Breast epithelium (tissue), 4 donors: ENCODE measurements at regions of chr5 and their contacts with region 1.

Region 1: GRCh38 chr5:55172051-55172899 is 702 bp downstream of the CDC20B start:
- DNase-seq: peak in 1 of 2 donors; percentile 42
- H3K4me3 ChIP-seq: peak overlapping the region; percentile 35 to 67 (median 53)
- H3K27ac ChIP-seq: no peak overlapping the region
- H3K4me1 ChIP-seq: peaks cover 0 to 5% of the 10 kb centered on the region in 2 donors
- H3K27me3 ChIP-seq: peaks cover 0 to 36% of the 10 kb centered on the region in 2 donors
- CTCF ChIP-seq: peak; percentile 66 to 82 (median 79)
- POLR2A ChIP-seq: no peak

Region 2: DNA sequence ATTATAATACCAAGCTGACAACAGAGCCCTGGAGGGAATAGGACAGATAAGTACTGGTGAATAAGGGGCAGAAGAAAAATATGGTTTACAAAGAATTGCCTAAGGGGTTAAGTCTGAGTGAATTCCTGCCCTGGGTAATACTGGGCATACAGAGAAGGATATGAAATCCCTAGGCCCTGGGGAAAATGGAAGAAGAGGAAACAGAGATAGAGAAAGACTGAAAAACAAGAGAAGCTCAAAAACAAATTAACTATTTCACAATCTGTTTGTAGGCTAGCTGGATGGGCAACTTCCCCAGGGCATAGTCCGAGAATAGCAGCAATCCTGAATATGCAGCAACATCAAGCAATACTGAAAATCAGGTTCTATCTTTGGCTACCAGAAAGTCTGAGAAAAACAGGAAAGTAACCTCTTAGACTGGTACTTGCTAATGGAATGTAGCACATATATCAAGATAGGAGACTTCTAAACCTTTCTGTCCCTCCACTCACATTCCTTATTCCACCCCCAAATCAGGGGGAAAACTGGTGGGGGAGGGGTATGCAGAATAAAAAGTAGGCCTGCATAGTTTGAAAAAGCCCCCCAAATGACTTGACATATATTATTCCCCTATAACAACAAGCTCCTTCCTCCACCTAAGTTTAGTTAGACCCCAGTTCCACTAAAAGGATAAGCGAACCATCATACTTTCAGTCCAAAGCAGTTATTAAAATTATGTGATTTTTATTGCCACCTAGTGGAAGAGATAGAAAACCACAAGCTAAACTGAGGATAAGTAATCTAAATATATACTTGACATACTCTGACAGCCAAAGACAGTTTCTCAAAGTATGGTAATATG is 519.2 kb after region 1 on chr5:
- intact Hi-C with region 1: loop called (anchors 10 kb)
- DNase-seq: no peak
- H3K4me3 ChIP-seq: peak overlapping the region in 2 of 3 donors; percentile 17 to 20
- H3K27ac ChIP-seq: peak overlapping the region; percentile 48 to 50
- H3K4me1 ChIP-seq: peaks cover 0 to 5% of the 10 kb centered on the region in 2 donors
- H3K27me3 ChIP-seq: no peaks in the 10 kb centered on the region
- CTCF ChIP-seq: peak; percentile 77 to 82 (median 79)
- POLR2A ChIP-seq: no peak